ENCODE measurements at regions of chr1 and their contacts with region 1.

Region 1: GRCh38 chr1:218330043-218330623 is 15.0 kb upstream of the TGFB2 start:
- DNase-seq: no peak
- H3K4me3 Mint-ChIP-seq: no peak overlapping the region
- H3K27ac Mint-ChIP-seq: peak overlapping the region; percentile 36
- H3K4me1 Mint-ChIP-seq: no peaks in the 10 kb centered on the region
- H3K27me3 Mint-ChIP-seq: no peaks in the 10 kb centered on the region
- CTCF ChIP-seq: peak; percentile 52

Region 2: DNA sequence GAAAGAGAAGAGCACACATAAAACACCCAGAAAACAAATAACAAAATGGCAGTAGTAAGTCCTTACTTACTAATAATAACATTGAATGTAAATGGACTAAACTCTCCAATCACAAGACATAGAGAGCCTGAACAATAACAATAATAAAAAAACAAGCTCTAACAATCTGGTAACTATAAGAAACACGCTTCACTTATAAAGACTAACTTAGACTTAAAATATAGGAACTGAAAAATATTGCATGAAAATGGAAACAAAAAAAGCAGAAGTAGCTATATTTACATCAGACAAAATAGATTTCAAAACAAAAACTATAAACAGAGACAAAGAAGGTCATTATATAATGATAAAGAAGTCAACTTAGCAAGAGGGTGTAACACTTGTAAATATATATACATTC is 760.5 kb after region 1 on chr1:
- CTCF ChIA-PET with region 1: no interaction called
- intact Hi-C with region 1: no loop called
- DNase-seq: no peak
- H3K4me3 Mint-ChIP-seq: no peak overlapping the region
- H3K27ac Mint-ChIP-seq: no peak overlapping the region
- H3K4me1 Mint-ChIP-seq: peaks cover 40% of the 10 kb centered on the region
- H3K27me3 Mint-ChIP-seq: no peaks in the 10 kb centered on the region
- CTCF ChIP-seq: no peak

Region 3: GRCh38 chr1:219317762-219318353 is 987.7 kb after region 1 on chr1:
- CTCF ChIA-PET with region 1: no interaction called
- intact Hi-C with region 1: loop called (anchors 10 kb)
- DNase-seq: peak; percentile 31
- H3K4me3 Mint-ChIP-seq: no peak overlapping the region
- H3K27ac Mint-ChIP-seq: no peak overlapping the region
- H3K4me1 Mint-ChIP-seq: peaks cover under 1% of the 10 kb centered on the region
- H3K27me3 Mint-ChIP-seq: no peaks in the 10 kb centered on the region
- CTCF ChIP-seq: no peak

Region 4: DNA sequence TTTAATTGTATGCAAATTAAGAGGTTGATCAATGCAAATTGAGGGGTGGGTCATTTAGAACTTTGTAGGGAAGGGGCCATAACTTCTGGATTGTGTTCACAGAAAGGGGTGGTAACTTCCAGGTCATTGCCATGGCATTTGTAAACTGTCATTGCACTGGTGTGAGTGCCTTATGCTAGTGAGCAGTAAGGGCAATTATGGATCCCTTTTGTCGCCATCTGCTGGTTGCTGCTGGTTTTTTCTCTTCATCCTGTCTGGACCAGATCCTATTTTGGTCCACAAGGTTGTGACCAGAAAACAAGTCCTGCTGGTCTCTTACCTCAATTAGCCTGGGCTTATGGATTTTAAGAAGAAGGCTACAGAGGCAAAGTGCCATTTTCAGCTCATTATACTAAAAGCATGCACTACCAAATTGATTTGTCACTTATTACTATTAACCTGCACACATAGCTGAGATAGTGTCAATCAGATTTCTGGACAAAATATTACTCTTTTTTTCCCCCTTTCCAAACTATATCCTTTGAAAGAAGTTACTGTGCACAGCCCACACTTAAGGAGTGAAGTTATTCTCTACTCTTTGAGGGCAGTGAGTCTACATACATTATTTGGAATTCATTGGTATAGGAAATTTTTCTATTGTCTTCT is 1086.6 kb after region 1 on chr1:
- CTCF ChIA-PET with region 1: no interaction called
- intact Hi-C with region 1: loop called (anchors 2 kb)
- DNase-seq: peak; percentile 80
- H3K4me3 Mint-ChIP-seq: no peak overlapping the region
- H3K27ac Mint-ChIP-seq: no peak overlapping the region
- H3K4me1 Mint-ChIP-seq: peaks cover 20% of the 10 kb centered on the region
- H3K27me3 Mint-ChIP-seq: no peaks in the 10 kb centered on the region
- CTCF ChIP-seq: peak; percentile 84